ENCODE measurements at regions of chr7 and their contacts with region 1.

Region 1: DNA sequence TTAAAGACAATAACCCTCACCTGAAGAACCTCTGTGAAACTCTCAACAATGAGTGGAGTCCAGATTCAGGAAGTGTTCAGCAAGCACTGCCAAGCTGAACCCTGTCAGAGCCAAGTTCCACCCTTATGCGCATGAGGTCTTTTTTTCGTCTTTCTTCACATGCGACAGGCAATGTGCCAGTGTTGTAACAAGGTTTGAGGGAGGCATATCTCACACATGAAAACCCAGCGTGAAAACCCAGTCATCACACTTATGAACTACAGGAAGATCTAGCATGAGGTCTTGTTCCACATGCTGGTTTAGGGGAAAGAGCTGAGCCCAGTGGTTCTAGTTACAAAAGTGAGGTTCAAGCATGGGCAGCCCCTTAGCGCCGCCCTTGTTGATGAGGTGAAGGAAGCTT is 49.7 kb downstream of the RABGEF1 start:
- DNase-seq: no peak
- H3K4me3 Mint-ChIP-seq: no peak overlapping the region
- H3K27ac Mint-ChIP-seq: no peak overlapping the region
- H3K4me1 Mint-ChIP-seq: no peaks in the 10 kb centered on the region
- H3K27me3 Mint-ChIP-seq: no peaks in the 10 kb centered on the region

Region 2: GRCh38 chr7:66564045-66564444 is 226.2 kb before region 1 on chr7:
- intact Hi-C with region 1: loop called (anchors 1 kb)
- DNase-seq: no peak
- H3K4me3 Mint-ChIP-seq: no peak overlapping the region
- H3K27ac Mint-ChIP-seq: no peak overlapping the region
- H3K4me1 Mint-ChIP-seq: no peaks in the 10 kb centered on the region
- H3K27me3 Mint-ChIP-seq: no peaks in the 10 kb centered on the region

Region 3: GRCh38 chr7:66804001-66804400 is 13.8 kb after region 1 on chr7:
- intact Hi-C with region 1: no loop called
- DNase-seq: no peak
- H3K4me3 Mint-ChIP-seq: no peak overlapping the region
- H3K27ac Mint-ChIP-seq: no peak overlapping the region
- H3K4me1 Mint-ChIP-seq: no peaks in the 10 kb centered on the region
- H3K27me3 Mint-ChIP-seq: no peaks in the 10 kb centered on the region

Measured in activated T-helper 1 cell treated with anti-CD3 and anti-CD28 coated beads, Interleukin-12 subunit alpha, Interleukin-12 subunit beta, Interleukin-2, Interleukin-4 antibody, amounts not matched to agents 30 ng/mL and 10 ng/mL and 1 ng/mL, durations not matched to agents 14 hours and 24 hours and 36 hours (primary cell).